ENCODE measurements at regions of chr2 and their contacts with region 1.

Region 1: DNA sequence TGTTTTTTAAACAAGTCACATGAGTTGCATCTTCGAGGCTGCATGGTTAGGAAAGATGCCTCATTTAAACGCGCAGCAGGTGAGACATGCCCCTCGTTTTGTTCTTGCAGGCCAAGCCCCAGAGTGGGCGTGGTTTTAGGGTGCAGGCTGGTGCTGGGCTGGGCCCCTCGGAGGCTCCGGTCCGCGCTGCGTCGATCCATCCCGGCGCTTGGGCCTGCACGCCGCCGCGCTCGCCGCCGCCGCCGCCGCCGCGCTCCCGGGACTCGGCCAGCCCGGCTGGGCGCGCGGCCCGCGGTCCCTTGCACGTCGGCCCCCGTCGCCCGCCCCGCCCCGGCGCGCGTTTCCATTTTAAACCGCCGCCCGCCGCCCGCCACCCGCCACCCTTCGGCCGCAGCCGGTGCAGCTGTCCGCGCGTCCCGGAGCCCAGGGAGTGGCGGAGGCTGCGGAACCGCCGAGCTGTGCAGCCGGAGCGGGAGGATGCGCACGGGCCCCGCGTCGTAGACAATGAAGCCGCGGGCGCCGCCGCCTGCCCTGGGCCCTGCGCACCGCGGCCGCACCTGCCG is 175.5 kb downstream of the AGAP1 start:
- DNase-seq: peak; percentile 63 to 87 (median 74)
- H3K4me3 ChIP-seq: peak overlapping the region in 56 of 59 donors; percentile 27 to 84 (median 66)
- H3K27ac ChIP-seq: peak overlapping the region in 41 of 59 donors; percentile 37 to 87 (median 65)
- H3K27me3 ChIP-seq: no peaks in the 10 kb centered on the region
- CTCF ChIP-seq: peak in 17 of 56 donors; percentile 6 to 37 (median 23)

Region 2: GRCh38 chr2:235070063-235070706 is 599.2 kb before region 1 on chr2:
- intact Hi-C with region 1: no loop called
- DNase-seq: no peak
- H3K4me3 ChIP-seq: no peak overlapping the region
- H3K27ac ChIP-seq: no peak overlapping the region
- H3K27me3 ChIP-seq: peaks cover 0 to 6% (median 0%) of the 10 kb centered on the region in 45 donors
- CTCF ChIP-seq: no peak

Region 3: DNA sequence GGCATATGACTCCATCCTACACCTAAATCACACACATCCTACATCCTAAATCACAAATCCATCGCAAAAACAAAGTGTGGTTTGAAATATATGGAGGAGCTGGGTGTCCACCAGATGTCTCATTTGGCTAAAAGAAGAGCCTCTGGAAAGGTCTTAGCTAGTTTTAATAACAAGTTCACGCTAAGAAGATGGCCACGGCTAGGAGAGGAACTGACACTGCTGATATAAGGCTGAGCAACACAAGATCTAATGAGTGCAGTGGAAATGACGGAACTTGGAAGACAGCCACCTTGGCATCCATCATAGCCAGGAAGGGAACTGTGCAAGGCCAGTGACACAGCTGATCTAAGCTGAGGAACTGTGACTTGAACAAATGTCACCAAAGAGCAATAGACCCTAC is 235.5 kb before region 1 on chr2:
- intact Hi-C with region 1: loop called in 1 of 2 experiments (anchors 10 kb)
- DNase-seq: peak in 7 of 10 donors; percentile 44 to 83 (median 61)
- H3K4me3 ChIP-seq: peak overlapping the region in 26 of 59 donors; percentile 0 to 55 (median 28)
- H3K27ac ChIP-seq: peak overlapping the region in 44 of 59 donors; percentile 0 to 77 (median 36)
- H3K27me3 ChIP-seq: no peaks in the 10 kb centered on the region
- CTCF ChIP-seq: peak in 52 of 56 donors; percentile 9 to 72 (median 41)

Region 4: DNA sequence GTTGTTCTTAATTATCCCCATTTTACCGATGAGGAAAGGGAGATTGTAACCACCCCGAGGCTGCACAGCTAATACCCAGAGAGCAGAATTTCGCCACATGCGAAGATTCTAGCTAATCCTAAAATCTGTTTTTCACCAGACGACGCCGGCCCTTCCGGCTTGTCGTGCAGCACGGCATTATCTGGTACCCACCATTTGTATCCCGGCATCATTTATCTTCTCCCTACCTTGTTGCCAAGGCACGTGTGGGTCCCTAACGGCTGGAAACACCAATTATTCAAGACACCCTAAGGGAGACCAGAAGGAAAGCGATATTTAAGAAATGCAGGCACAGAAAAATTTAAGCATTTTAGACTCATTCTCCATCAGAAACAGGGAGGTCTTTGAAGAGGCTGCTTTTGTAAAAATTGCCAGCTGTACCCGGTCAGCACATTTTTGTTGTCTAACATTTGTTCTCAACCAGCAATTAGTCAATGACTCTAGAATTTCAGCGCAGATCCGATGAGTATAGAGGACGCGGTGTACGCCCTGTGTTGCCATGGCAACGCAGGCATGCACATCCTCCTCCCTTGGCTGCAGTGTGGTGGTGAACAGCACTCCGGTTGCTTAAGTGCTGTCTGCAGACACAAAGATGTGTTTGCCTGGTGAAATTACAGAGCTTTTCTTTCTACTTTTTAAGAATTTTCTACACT is 63.9 kb before region 1 on chr2:
- intact Hi-C with region 1: loop called in 1 of 2 experiments (anchors 5 kb)
- DNase-seq: peak; percentile 80 to 96 (median 92)
- H3K4me3 ChIP-seq: peak overlapping the region; percentile 3 to 68 (median 43)
- H3K27ac ChIP-seq: peak overlapping the region in 58 of 59 donors; percentile 74 to 99 (median 92)
- H3K27me3 ChIP-seq: no peaks in the 10 kb centered on the region
- CTCF ChIP-seq: peak in 11 of 56 donors; percentile 6 to 31 (median 16)

Region 5: DNA sequence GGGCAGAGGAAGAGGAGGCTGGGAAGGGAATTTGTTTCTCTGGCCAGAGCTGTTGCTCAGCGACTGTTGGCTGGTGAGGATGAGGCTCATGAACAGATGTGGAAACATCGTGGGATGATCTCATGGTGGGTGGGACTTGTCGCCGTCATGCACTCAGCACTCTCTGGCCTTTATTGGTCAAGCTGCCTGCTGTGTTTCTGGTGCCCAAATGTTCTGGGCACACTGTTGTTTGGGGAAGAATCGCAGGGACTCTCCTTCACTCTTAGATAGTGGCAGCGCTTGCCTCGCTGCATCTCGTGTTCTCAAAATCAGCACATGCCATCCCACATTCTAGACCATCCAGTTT is 29.9 kb before region 1 on chr2:
- intact Hi-C with region 1: loop called (anchors 2 to 5 kb)
- DNase-seq: peak; percentile 33 to 97 (median 92)
- H3K4me3 ChIP-seq: peak overlapping the region in 34 of 59 donors; percentile 4 to 57 (median 28)
- H3K27ac ChIP-seq: peak overlapping the region; percentile 74 to 99 (median 96)
- H3K27me3 ChIP-seq: no peaks in the 10 kb centered on the region
- CTCF ChIP-seq: peak in 1 of 56 donors; percentile 5

Region 6: GRCh38 chr2:235709969-235710879 is 40.9 kb after region 1 on chr2:
- intact Hi-C with region 1: loop called in 1 of 2 experiments (anchors 5 kb)
- DNase-seq: peak in 2 of 10 donors; percentile 39 to 59
- H3K4me3 ChIP-seq: peak overlapping the region in 1 of 59 donors; percentile 17
- H3K27ac ChIP-seq: peak overlapping the region in 54 of 59 donors; percentile 4 to 93 (median 77)
- H3K27me3 ChIP-seq: no peaks in the 10 kb centered on the region
- CTCF ChIP-seq: no peak

Region 7: DNA sequence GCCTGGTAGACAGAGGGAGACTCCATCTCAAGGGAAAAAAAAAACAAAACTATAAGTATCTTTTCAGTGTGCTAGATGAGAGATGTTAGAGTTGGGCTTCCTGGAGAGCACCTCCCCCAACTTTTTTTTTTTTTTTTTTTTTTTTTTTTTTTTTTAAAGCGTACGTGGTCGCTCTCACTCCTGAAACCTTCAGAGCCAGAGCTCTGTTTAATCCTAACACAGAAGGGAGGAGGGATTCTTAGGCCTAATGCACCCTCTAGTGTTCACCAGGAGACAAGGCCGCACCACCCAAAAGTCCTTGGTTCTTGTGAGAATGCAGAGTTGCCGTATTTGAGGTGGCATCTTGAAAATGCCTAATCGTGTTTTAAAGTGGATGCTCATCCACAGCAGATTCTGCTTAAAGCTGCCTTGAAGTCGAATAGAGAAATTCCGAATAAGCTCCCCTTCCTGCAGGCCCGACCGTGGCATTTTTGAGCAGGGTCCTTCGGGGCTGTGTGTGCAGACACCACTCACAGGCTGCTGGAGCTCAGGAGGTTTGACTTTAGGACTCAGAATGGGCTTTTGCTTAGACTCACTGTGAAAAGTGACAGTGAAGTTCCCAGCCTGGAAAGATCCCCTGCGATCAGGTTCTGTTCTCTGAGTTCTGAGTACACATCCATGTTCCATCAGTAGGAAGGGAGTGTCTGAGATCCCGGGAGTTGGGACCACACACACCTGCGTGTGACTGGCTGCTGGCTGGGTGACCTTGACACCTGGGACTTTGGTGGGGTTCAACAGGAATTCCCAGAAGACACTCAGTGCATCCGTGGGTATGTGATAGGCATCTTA is 77.1 kb after region 1 on chr2:
- intact Hi-C with region 1: loop called (anchors 1 to 2 kb)
- DNase-seq: peak in 5 of 10 donors; percentile 62 to 84 (median 76)
- H3K4me3 ChIP-seq: no peak overlapping the region
- H3K27ac ChIP-seq: peak overlapping the region in 25 of 59 donors; percentile 2 to 72 (median 48)
- H3K27me3 ChIP-seq: no peaks in the 10 kb centered on the region
- CTCF ChIP-seq: peak; percentile 47 to 93 (median 85)

Measured in dorsolateral prefrontal cortex (tissue), 120 donors.